Activated CD4-positive, alpha-beta T cell treated with anti-CD3 and anti-CD28 coated beads, Interleukin-2, amount 10 ng/mL, durations not matched to agents 24 days and 14 days (primary cell): ENCODE measurements at regions of chr10 and their contacts with region 1.

Region 1: DNA sequence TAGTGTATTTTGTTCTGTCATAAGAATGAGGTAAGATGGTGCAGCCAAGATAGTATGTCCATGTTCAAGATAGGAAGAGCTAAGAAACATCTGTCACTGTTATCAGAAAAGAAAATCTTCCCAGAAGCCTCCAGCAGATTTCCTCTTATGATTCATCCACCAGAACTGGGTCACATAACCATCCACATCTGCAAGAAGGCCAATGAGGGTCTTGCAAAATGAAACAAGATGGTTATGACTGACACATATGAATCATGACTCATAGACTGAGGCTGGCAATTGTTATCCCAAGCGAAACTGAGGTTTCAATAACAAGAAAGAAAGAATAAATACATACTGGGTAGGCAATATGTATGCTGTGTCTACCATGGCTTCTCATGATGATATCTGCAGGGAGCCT is 30.3 kb downstream of the CCNJ start:
- DNase-seq: peak; percentile 67
- H3K4me3 Mint-ChIP-seq: peak overlapping the region; percentile 14
- H3K27ac Mint-ChIP-seq: peak overlapping the region; percentile 61
- H3K4me1 Mint-ChIP-seq: peaks cover 27% of the 10 kb centered on the region
- H3K27me3 Mint-ChIP-seq: no peaks in the 10 kb centered on the region

Region 2: DNA sequence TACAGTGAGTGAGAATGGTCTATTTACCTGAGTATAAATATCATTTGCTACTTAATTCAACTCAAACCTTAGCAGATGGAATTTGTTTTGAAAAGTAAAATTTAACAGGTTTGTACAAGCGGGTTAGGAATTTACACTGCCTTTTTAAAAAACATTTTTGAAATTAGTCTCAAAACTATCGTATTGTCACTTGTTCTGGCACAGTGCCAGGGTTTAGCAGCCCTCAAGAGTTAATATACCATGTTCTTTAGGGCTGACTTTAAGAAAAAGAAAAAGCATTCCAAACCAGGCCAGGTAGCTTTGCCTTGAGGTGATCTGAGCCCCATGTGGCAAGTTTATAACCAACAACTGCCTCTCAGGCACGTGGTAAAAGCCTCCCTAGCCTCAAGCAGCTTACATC is 12.5 kb before region 1 on chr10:
- intact Hi-C with region 1: loop called (anchors 1 kb)
- DNase-seq: no peak
- H3K4me3 Mint-ChIP-seq: no peak overlapping the region
- H3K27ac Mint-ChIP-seq: no peak overlapping the region
- H3K4me1 Mint-ChIP-seq: peaks cover 33% of the 10 kb centered on the region
- H3K27me3 Mint-ChIP-seq: no peaks in the 10 kb centered on the region

Region 3: GRCh38 chr10:96089670-96090462 is 16.1 kb after region 1 on chr10:
- intact Hi-C with region 1: loop called (anchors 1 kb)
- DNase-seq: peak; percentile 97
- H3K4me3 Mint-ChIP-seq: peak overlapping the region; percentile 95
- H3K27ac Mint-ChIP-seq: peak overlapping the region; percentile 99
- H3K4me1 Mint-ChIP-seq: peaks cover 12% of the 10 kb centered on the region
- H3K27me3 Mint-ChIP-seq: peaks cover 17% of the 10 kb centered on the region

Region 4: DNA sequence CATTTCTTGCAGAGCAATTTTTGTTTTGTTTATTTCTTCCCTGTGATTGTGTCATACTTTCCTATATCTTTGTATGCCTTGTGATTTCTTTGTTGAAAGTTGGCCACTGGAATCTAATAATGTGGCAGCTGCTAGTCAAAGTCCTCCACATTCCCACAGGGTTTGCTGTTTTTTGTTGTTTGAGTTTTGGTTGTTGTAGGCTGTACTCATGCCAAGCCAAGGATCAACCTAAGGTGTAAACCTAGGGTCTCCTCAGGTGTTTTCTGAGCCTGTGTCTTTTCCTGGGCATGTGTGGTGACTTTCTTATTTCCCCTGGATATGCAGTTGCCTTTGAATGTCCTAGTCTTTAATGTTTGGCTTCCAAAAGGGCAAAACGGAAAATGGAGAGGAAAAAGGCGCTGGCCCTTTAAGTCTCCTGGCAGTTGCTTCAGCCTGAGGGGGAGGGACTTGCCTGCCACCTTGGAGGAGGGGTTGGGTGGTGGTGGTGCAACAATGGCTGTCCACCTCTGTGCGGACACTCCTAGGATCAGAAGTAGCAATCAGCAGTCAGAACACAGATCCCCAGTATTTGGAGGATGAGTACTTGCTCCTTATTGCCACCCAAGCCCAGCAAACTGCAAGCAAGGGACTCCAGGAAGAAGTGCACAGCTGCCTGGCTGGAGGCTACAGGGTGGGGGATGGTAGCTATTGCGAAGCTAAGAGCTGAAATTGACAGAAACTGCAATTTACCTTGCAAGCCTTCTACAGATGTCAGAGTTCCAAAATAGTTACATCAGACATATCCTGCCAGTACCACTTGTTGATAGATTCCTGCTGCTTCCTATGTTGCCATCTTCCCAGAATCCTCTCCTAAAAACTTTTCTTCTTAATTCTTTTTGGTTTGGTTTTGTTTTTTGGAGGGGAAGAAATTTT is 50.8 kb after region 1 on chr10:
- intact Hi-C with region 1: no loop called
- DNase-seq: peak; percentile 59
- H3K4me3 Mint-ChIP-seq: no peak overlapping the region
- H3K27ac Mint-ChIP-seq: no peak overlapping the region
- H3K4me1 Mint-ChIP-seq: peaks cover 10% of the 10 kb centered on the region
- H3K27me3 Mint-ChIP-seq: peaks cover 48% of the 10 kb centered on the region

Region 5: DNA sequence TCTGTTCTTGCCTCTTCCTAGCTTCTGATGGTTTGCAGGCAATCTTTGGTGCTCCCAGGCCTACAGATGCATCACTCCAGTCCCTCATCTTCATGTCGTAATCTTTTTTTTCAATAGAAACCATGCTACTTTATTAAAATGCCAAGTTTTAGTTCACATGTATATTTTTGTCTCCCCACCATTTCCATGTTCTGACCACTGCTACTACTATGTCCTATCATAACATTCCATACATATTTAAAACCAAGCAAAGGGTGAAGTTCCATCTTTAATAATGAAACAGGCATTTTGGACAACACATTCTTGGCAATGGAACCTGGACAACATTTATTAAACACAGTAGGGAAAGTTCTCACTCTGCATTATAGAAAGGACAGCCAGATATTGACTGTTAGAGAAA is 115.2 kb after region 1 on chr10:
- intact Hi-C with region 1: no loop called
- DNase-seq: no peak
- H3K4me3 Mint-ChIP-seq: no peak overlapping the region
- H3K27ac Mint-ChIP-seq: no peak overlapping the region
- H3K4me1 Mint-ChIP-seq: no peaks in the 10 kb centered on the region
- H3K27me3 Mint-ChIP-seq: peaks cover 7% of the 10 kb centered on the region